Astrocyte of the cerebellum (primary cell): ENCODE measurements at regions of chr7 and their contacts with region 1.

Region 1: DNA sequence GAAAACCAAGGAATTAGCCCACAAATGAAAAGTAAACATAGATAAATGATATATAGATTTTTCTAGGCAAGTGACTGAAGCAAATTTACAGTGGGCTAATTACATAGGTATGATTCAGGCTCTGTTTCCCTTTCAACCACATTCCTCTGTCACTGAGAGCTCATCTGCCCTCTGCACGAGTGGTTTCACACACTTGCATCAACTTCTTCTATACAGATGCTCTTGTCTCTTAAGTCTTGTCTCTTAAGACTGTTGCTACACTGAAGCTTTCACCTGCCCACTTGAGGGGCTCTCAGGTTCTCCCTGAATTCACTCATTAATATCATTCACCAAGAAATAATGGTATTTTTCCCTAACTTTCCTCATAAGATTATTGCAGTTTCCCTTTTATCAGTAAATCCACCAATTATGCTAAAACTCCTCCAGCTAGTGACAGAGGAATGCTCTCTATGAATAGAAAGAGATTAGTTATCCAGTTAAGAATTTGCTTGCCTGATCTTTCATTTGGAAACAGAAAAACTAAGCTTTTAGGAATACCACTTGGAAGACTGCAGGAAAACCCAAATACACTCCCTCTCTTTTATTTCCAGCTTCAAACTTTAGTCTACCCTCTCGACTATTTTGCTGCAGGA is 95.7 kb downstream of the ELAPOR2 start:
- DNase-seq: no peak
- H3K4me3 ChIP-seq: no peak overlapping the region
- CTCF ChIP-seq: no peak

Region 2: GRCh38 chr7:87148332-87148955 is 184.7 kb after region 1 on chr7:
- in situ Hi-C with region 1: loop called (anchors 25 kb)
- DNase-seq: peak; percentile 31
- H3K4me3 ChIP-seq: no peak overlapping the region
- CTCF ChIP-seq: peak; percentile 44

Region 3: GRCh38 chr7:87225696-87226095 is 262.0 kb after region 1 on chr7:
- in situ Hi-C with region 1: loop called (anchors 25 kb)
- DNase-seq: no peak
- H3K4me3 ChIP-seq: no peak overlapping the region
- CTCF ChIP-seq: no peak